Activated T-helper 1 cell treated with anti-CD3 and anti-CD28 coated beads, Interleukin-12 subunit alpha, Interleukin-12 subunit beta, Interleukin-2, Interleukin-4 antibody, amounts not matched to agents 30 ng/mL and 10 ng/mL and 1 ng/mL, durations not matched to agents 14 hours and 24 hours and 36 hours (primary cell): ENCODE measurements at regions of chr1 and their contacts with region 1.

Region 1: GRCh38 chr1:167542109-167543032 is 11.2 kb downstream of the CREG1 start:
- DNase-seq: no peak
- H3K4me3 Mint-ChIP-seq: peak overlapping the region; percentile 12
- H3K27ac Mint-ChIP-seq: peak overlapping the region; percentile 35
- H3K4me1 Mint-ChIP-seq: peaks cover 67% of the 10 kb centered on the region
- H3K27me3 Mint-ChIP-seq: no peaks in the 10 kb centered on the region

Region 2: GRCh38 chr1:166283190-166283589 is 1259.2 kb before region 1 on chr1:
- intact Hi-C with region 1: no loop called
- DNase-seq: no peak
- H3K4me3 Mint-ChIP-seq: no peak overlapping the region
- H3K27ac Mint-ChIP-seq: no peak overlapping the region
- H3K4me1 Mint-ChIP-seq: no peaks in the 10 kb centered on the region
- H3K27me3 Mint-ChIP-seq: no peaks in the 10 kb centered on the region

Region 3: DNA sequence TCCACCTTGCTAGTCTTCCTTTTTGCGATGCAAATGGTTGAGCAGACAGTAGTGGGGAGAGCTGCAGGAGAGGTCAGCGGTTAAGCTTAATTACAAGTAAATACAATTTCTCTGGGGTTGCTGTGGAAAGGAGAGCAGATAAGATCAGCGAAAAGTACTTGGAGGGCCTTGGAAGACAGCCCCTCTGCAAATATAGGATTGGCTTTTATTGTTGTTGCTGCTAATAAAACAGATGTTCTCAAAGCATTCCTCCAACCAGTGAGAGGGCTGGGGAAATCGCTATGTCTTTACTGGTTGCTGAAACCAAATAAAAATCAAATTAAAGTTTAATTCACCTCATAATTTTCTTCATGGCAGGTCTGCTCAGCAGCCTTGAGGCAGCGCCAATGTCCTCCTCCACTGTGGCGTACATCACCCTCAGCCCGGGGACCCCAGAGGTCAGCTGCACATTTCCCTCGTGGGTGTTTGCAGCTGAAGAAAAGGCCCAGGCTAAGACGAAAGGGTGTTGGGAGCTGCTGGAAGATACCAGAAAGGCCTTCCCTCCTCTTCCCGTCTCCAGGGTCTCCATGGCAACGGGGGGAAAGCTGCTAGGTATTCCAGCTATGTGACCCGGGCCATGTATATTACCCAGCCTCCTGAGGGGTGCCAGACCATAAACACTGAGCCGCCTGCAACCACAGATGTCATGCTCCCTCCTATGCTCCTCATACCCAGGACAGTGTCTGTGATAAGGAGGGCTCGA is 376.3 kb before region 1 on chr1:
- intact Hi-C with region 1: loop called (anchors 5 kb)
- DNase-seq: no peak
- H3K4me3 Mint-ChIP-seq: no peak overlapping the region
- H3K27ac Mint-ChIP-seq: no peak overlapping the region
- H3K4me1 Mint-ChIP-seq: peaks cover 7% of the 10 kb centered on the region
- H3K27me3 Mint-ChIP-seq: peaks cover 30% of the 10 kb centered on the region